ENCODE measurements at regions of chr14 and their contacts with region 1.

Region 1: DNA sequence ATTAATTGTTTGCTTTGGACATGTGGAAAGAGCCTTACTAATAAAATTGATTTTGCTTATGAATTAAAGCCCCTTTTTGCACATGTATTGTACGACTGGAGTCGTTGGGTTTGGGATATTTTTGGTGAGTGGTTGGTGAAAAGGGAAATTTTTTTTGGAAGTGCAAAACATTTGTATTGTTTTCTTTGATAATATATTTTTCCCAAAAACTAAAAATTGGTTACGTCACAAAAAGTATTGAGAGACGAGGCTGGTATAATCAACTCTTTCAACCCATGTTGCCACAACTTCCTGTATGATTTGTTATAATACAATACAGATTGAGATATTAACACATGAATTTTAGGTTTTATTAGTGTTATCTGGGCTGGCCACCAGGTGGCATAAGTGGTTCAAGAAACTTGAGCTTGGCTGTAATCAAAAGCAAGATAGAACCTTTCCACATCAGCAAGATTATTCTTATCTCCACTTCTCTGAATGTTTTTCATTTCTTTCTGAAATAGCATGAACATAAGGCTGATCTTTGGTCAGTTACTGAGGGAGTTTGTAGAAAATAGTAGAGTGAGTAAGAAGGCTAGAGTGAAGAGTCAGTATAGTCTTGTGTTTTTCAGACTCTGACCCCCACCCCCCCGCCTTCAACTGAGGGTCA is 8.7 kb downstream of the NGDN start:
- DNase-seq: peak; percentile 57
- ATAC-seq: peak; percentile 47 to 68

Region 2: GRCh38 chr14:23567192-23568020 is 89.2 kb after region 1 on chr14 and contains the start of gene AP1G2:
- intact Hi-C with region 1: loop called in 1 of 2 experiments (anchors 5 kb)
- DNase-seq: peak; percentile 88
- ATAC-seq: peak; percentile 84 to 90
- total RNA-seq, gene AP1G2: 16.5 to 32.3 TPM

Measured in left cardiac atrium (tissue), 4 donors.